Caki2 (cell line): ENCODE measurements at regions of chr16 and their contacts with region 1.

Region 1: GRCh38 chr16:71734511-71734910 is 10.0 kb upstream of the PHLPP2 start:
- DNase-seq: no peak

Region 2: GRCh38 chr16:71781741-71782140 is 47.2 kb after region 1 on chr16:
- in situ Hi-C with region 1: loop called (anchors 10 kb)
- DNase-seq: peak; percentile 47